Activated CD4-positive, alpha-beta T cell treated with anti-CD3 and anti-CD28 coated beads for 36 hours (primary cell): ENCODE measurements at regions of chr17 and their contacts with region 1.

Region 1: GRCh38 chr17:48577946-48578615 is at the start of gene HOXB4:
- DNase-seq: peak; percentile 80
- ATAC-seq: peak; percentile 72
- H3K4me3 Mint-ChIP-seq: peak within 1 kb of the TSS; percentile 81
- H3K27ac Mint-ChIP-seq: peak within 1 kb of the TSS; percentile 47
- H3K4me1 Mint-ChIP-seq: peaks cover 43% of the 10 kb centered on the region
- H3K27me3 Mint-ChIP-seq: peaks cover 52% of the 10 kb centered on the region
- total RNA-seq, gene HOXB4: 0.66 to 1.1 TPM

Region 2: DNA sequence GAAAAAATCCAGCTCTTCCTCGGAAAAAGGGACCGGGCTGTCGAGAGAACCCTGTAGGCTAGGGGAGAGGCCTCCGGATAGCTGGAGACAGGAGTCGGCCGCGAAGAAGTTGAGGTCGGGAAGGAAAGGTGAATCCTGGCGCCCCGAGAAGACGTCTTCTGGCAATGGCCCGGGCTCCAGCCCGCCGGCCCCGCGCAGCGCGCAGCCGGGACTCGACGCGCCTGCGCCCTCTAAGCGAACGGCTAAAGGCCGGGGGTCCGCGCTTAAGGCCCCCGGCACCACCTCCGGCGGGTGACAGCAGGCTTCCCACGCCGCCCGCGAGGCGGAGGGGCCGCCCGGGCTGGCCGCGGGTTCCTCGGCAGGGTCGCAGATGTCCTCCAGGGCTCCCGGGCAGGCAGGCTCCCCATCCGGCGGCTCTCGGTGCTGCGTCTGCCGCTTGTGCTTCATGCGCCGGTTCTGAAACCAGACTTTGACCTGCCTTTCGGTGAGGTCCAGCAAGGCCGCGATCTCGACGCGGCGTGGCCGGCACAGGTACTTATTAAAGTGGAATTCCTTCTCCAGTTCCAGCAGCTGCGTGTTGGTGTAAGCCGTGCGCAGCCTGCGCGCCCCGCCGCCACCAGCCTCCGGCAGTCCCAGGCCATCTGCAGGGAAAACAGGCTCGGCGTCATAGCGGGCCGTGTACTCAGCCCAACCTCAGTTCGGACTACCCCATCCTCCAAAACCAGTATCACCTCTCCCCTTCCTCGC is 34.8 kb before region 1 on chr17:
- CTCF ChIA-PET with region 1: interaction called, 3 read pairs
- POLR2A ChIA-PET with region 1: no interaction called
- intact Hi-C with region 1: loop called (anchors 2 to 5 kb)
- DNase-seq: peak; percentile 77
- ATAC-seq: peak; percentile 75
- H3K4me3 Mint-ChIP-seq: peak overlapping the region; percentile 75
- H3K27ac Mint-ChIP-seq: peak overlapping the region; percentile 69
- H3K4me1 Mint-ChIP-seq: peaks cover 33% of the 10 kb centered on the region
- H3K27me3 Mint-ChIP-seq: peaks cover 49% of the 10 kb centered on the region